ENCODE measurements at regions of chr7 and their contacts with region 1.

Region 1: GRCh38 chr7:35694781-35695472 is at the start of gene HERPUD2:
- DNase-seq: peak; percentile 92 to 93
- ATAC-seq: peak; percentile 95
- H3K4me3 ChIP-seq: peak within 1 kb of the TSS; percentile 68 to 97 (median 89)
- H3K27ac ChIP-seq: peak within 1 kb of the TSS; percentile 92 to 98 (median 96)
- H3K4me1 ChIP-seq: peaks cover 45 to 47% of the 10 kb centered on the region in 2 donors
- H3K27me3 ChIP-seq: no peaks in the 10 kb centered on the region
- CTCF ChIP-seq: peak in 1 of 5 experiments; percentile 10
- POLR2A ChIP-seq: peak; percentile 85 to 92
- total RNA-seq, gene HERPUD2: 12.2 to 27.8 (median 24.7) TPM

Region 2: DNA sequence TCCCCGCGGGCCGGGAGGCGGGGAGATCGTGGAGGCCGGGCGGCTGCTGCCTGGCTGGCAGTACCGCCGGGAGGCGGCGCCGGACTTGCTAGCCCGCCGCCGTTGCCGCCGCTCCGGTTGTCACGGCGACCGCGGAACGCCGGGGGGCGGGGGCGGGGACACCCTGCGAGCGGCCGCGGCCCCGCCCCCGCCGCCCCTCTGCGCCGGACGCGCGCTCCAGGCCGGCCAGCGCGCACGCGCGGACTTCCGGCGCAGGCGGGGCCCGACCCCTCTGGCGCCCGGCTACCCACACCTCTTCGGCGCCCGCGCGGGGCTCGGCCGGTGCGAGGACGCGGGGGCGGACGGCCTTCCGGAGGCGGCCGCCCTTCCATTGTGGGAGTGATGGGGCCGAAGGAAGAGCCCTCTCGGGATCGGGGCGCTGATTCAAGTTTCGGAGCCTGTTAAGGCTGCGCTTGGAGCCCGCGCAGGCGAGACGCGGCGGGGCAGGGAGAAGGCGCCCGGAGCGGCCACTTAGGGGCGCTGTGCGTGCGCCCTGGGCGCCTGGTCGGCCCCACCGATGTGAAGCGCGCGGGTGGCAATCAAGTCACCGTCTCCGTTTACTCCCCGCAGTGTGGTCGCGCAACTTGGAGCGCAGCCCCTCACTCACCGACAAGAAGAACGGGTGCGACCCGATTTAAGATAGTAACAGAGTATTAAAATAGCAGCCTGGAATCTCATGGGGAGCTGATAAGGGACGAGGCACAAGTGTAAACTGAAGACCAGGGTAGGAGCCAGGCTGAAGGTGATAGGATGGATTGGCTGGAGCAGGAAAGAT is 657.2 kb before region 1 on chr7:
- in situ Hi-C with region 1: loop called in 1 of 4 experiments (anchors 25 kb)
- intact Hi-C with region 1: loop called (anchors 10 kb)
- DNase-seq: peak; percentile 84 to 90
- ATAC-seq: peak; percentile 89 to 92
- H3K4me3 ChIP-seq: peak overlapping the region; percentile 71 to 87 (median 78)
- H3K27ac ChIP-seq: peak overlapping the region; percentile 80 to 93 (median 88)
- H3K4me1 ChIP-seq: peaks cover 9 to 12% of the 10 kb centered on the region in 2 donors
- H3K27me3 ChIP-seq: no peaks in the 10 kb centered on the region
- CTCF ChIP-seq: peak; percentile 68 to 91 (median 83)
- POLR2A ChIP-seq: peak in 1 of 2 donors; percentile 31

Region 3: GRCh38 chr7:35647171-35647574 is 47.8 kb before region 1 on chr7:
- in situ Hi-C with region 1: no loop called
- intact Hi-C with region 1: loop called (anchors 5 kb)
- DNase-seq: no peak
- ATAC-seq: peak; percentile 41 to 69
- H3K4me3 ChIP-seq: no peak overlapping the region
- H3K27ac ChIP-seq: peak overlapping the region; percentile 40 to 76 (median 60)
- H3K4me1 ChIP-seq: peaks cover 47 to 62% of the 10 kb centered on the region in 2 donors
- H3K27me3 ChIP-seq: no peaks in the 10 kb centered on the region
- CTCF ChIP-seq: no peak
- POLR2A ChIP-seq: no peak

Region 4: DNA sequence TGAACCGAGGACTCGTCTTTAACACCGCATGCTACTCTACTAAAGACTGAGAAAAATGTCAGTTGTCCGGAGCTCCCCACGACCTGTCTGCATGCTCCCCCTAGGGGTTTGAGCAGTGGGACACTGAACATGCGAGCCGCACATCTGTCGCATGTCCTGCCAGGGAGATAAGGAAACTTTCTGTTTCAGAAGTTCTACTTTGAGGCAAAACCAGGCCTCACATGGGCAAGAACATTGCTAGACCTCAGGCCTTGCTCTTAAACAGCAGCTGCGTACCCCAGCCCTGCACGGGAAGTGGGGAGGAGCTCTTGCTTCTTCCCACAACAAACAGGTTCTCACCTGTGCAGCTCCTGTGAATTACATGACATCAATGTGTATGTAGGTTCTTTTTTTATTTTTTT is 30.4 kb after region 1 on chr7:
- in situ Hi-C with region 1: no loop called
- intact Hi-C with region 1: no loop called
- DNase-seq: peak in 1 of 2 donors; percentile 18
- ATAC-seq: no peak
- H3K4me3 ChIP-seq: no peak overlapping the region
- H3K27ac ChIP-seq: no peak overlapping the region
- H3K4me1 ChIP-seq: peaks cover 13 to 21% of the 10 kb centered on the region in 2 donors
- H3K27me3 ChIP-seq: no peaks in the 10 kb centered on the region
- CTCF ChIP-seq: no peak
- POLR2A ChIP-seq: no peak

Region 5: GRCh38 chr7:36303202-36304098 is 608.5 kb after region 1 on chr7:
- in situ Hi-C with region 1: no loop called
- intact Hi-C with region 1: loop called (anchors 10 kb)
- DNase-seq: peak; percentile 77 to 91
- ATAC-seq: peak; percentile 83 to 86
- H3K4me3 ChIP-seq: no peak overlapping the region
- H3K27ac ChIP-seq: peak overlapping the region; percentile 80 to 91 (median 87)
- H3K4me1 ChIP-seq: peaks cover 48 to 50% of the 10 kb centered on the region in 2 donors
- H3K27me3 ChIP-seq: no peaks in the 10 kb centered on the region
- CTCF ChIP-seq: peak in 1 of 5 experiments; percentile 5
- POLR2A ChIP-seq: peak; percentile 24 to 51